Ovary (tissue), 10 donors: ENCODE measurements at regions of chr11 and their contacts with region 1.

Region 1: GRCh38 chr11:76605338-76606074 is 65.0 kb downstream of the LRRC32 start:
- DNase-seq: peak in 3 of 5 donors; percentile 18 to 40 (median 19)
- H3K4me3 ChIP-seq: no peak overlapping the region
- H3K27ac ChIP-seq: peak overlapping the region in 1 of 2 donors; percentile 64
- H3K4me1 ChIP-seq: peaks cover 40% of the 10 kb centered on the region
- H3K27me3 ChIP-seq: no peaks in the 10 kb centered on the region
- CTCF ChIP-seq: no peak
- EP300 ChIP-seq: no peak
- POLR2A ChIP-seq: no peak

Region 2: GRCh38 chr11:76680518-76681425 is 75.3 kb after region 1 on chr11:
- intact Hi-C with region 1: loop called in 1 of 4 experiments (anchors 2 kb)
- DNase-seq: peak; percentile 70 to 82 (median 79)
- H3K4me3 ChIP-seq: no peak overlapping the region
- H3K27ac ChIP-seq: no peak overlapping the region
- H3K4me1 ChIP-seq: no peaks in the 10 kb centered on the region
- H3K27me3 ChIP-seq: no peaks in the 10 kb centered on the region
- CTCF ChIP-seq: peak; percentile 75 to 95 (median 84)
- EP300 ChIP-seq: no peak
- POLR2A ChIP-seq: no peak